Right ventricle myocardium superior (tissue), 1 donor: ENCODE measurements at regions of chr1 and their contacts with region 1.

Region 1: GRCh38 chr1:70685300-70686241 is 274.5 kb downstream of the CTH start:
- DNase-seq: no peak
- ATAC-seq: peak; percentile 93

Region 2: DNA sequence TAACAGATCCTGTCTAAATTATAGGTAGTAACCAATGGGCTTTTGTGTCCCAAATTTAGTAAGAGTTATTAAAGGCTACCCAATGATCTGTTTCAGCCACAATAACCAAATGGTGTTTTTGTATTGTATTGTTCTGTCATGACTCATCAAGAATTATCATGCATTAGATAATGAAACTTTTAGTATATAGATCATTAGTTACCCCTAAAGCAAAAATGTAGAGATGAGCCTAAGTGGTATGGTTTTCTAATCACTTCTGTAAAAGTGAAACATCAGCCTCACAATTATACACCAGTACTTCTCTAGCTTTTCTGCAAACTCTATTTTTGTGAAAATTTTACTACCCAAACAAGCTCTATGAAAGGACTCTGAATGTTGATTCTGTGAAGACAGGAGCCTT is 1046.4 kb before region 1 on chr1:
- intact Hi-C with region 1: no loop called
- DNase-seq: no peak
- ATAC-seq: no peak

Region 3: GRCh38 chr1:70617728-70618127 is 67.8 kb before region 1 on chr1:
- intact Hi-C with region 1: no loop called
- DNase-seq: no peak
- ATAC-seq: no peak

Region 4: GRCh38 chr1:70896224-70896623 is 210.7 kb after region 1 on chr1:
- intact Hi-C with region 1: loop called (anchors 10 kb)
- DNase-seq: no peak
- ATAC-seq: peak; percentile 27

Region 5: GRCh38 chr1:71049951-71050598 is 364.5 kb after region 1 on chr1:
- intact Hi-C with region 1: loop called (anchors 5 kb)
- DNase-seq: no peak
- ATAC-seq: peak; percentile 69